ENCODE measurements at regions of chr1 and their contacts with region 1.

Region 1: GRCh38 chr1:9196129-9197040 is 38.2 kb upstream of the H6PD start:
- DNase-seq: peak; percentile 44
- H3K4me3 Mint-ChIP-seq: no peak overlapping the region
- H3K27ac Mint-ChIP-seq: peak overlapping the region; percentile 3
- H3K4me1 Mint-ChIP-seq: peaks cover 28% of the 10 kb centered on the region
- H3K27me3 Mint-ChIP-seq: peaks cover 54% of the 10 kb centered on the region

Region 2: DNA sequence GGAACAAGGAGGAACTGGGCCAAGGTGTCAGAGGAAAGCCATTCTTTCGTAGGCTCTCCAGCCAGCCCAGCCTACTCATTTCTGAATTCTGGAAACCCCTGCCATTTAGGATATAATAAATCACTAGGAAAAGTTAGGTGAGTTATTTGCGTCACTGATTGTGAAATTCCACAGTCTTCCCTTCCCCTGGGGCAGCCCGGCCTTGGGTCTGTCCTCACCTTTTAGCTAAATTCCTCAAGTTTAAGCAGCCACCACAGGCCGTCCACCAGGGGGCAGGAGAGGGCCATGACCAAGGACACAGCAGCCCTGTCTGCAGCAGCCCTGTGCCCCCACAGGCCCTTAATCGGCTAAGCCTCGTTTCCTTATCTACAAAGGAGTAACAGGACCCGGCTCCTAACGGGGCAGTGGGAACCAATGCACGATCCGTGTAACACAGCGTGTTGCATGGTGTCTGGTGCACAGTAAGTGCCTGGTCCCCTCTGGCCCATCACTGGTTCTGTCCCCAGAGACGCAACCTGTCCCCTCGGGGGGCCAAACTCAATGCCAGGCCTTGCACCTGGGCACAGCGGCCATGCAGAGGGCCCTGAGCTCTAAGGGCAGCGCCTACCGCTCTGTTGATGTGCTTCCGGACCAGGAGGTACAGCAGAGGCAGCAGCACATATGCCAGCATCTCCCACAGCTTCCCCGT is 85.6 kb before region 1 on chr1:
- intact Hi-C with region 1: loop called (anchors 1 kb)
- DNase-seq: peak; percentile 70
- H3K4me3 Mint-ChIP-seq: no peak overlapping the region
- H3K27ac Mint-ChIP-seq: no peak overlapping the region
- H3K4me1 Mint-ChIP-seq: peaks cover 14% of the 10 kb centered on the region
- H3K27me3 Mint-ChIP-seq: no peaks in the 10 kb centered on the region

Region 3: GRCh38 chr1:9145021-9145668 is 51.2 kb before region 1 on chr1:
- intact Hi-C with region 1: loop called (anchors 1 kb)
- DNase-seq: no peak
- H3K4me3 Mint-ChIP-seq: no peak overlapping the region
- H3K27ac Mint-ChIP-seq: no peak overlapping the region
- H3K4me1 Mint-ChIP-seq: peaks cover 11% of the 10 kb centered on the region
- H3K27me3 Mint-ChIP-seq: no peaks in the 10 kb centered on the region

Region 4: GRCh38 chr1:9181176-9181906 is 15.0 kb before region 1 on chr1:
- intact Hi-C with region 1: loop called (anchors 1 kb)
- DNase-seq: peak; percentile 66
- H3K4me3 Mint-ChIP-seq: peak overlapping the region; percentile 88
- H3K27ac Mint-ChIP-seq: peak overlapping the region; percentile 80
- H3K4me1 Mint-ChIP-seq: peaks cover 17% of the 10 kb centered on the region
- H3K27me3 Mint-ChIP-seq: peaks cover 6% of the 10 kb centered on the region